ENCODE measurements at regions of chr19 and their contacts with region 1.

Region 1: DNA sequence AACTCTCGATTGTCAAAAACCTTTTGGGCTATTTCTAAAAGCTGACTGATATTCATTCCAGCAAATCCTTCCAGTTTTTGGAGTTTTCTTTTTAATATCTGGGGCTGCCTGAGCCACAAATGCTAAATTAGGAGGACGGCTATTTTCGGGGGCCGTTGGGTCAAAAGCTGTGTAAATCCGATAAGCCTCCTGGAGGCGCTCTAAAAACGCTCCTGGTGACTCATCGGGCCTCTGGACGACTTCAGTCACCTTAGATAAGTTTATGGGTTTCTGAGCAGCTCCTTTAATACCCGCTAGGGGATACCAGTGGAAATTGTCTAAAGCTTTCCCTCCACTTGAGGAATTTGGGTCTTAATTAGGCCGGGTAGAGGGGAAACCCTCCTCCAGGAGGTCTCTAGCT is 66.4 kb downstream of the ZNF730 start:
- DNase-seq: no peak
- H3K4me3 ChIP-seq: no peak overlapping the region
- H3K27ac ChIP-seq: no peak overlapping the region
- H3K4me1 ChIP-seq: no peaks in the 10 kb centered on the region
- H3K27me3 ChIP-seq: no peaks in the 10 kb centered on the region
- CTCF ChIP-seq: no peak

Region 2: GRCh38 chr19:23436318-23436717 is 253.1 kb after region 1 on chr19:
- intact Hi-C with region 1: loop called (anchors 10 kb)
- DNase-seq: no peak
- H3K4me3 ChIP-seq: no peak overlapping the region
- H3K27ac ChIP-seq: no peak overlapping the region
- H3K4me1 ChIP-seq: no peaks in the 10 kb centered on the region
- H3K27me3 ChIP-seq: no peaks in the 10 kb centered on the region
- CTCF ChIP-seq: no peak

Measured in ascending aorta (tissue), 2 donors.